ENCODE measurements at regions of chr14 and their contacts with region 1.

Region 1: GRCh38 chr14:78566026-78566858 is 396.1 kb downstream of the NRXN3 start:
- DNase-seq: peak; percentile 39 to 66 (median 46)
- ATAC-seq: peak; percentile 99
- H3K4me3 ChIP-seq: no peak overlapping the region
- H3K27ac ChIP-seq: no peak overlapping the region
- H3K4me1 ChIP-seq: no peaks in the 10 kb centered on the region
- H3K27me3 ChIP-seq: no peaks in the 10 kb centered on the region
- CTCF ChIP-seq: peak; percentile 71 to 75 (median 72)
- EP300 ChIP-seq: no peak
- POLR2A ChIP-seq: no peak
- RAD21 ChIP-seq: peak; percentile 63 to 76

Region 2: DNA sequence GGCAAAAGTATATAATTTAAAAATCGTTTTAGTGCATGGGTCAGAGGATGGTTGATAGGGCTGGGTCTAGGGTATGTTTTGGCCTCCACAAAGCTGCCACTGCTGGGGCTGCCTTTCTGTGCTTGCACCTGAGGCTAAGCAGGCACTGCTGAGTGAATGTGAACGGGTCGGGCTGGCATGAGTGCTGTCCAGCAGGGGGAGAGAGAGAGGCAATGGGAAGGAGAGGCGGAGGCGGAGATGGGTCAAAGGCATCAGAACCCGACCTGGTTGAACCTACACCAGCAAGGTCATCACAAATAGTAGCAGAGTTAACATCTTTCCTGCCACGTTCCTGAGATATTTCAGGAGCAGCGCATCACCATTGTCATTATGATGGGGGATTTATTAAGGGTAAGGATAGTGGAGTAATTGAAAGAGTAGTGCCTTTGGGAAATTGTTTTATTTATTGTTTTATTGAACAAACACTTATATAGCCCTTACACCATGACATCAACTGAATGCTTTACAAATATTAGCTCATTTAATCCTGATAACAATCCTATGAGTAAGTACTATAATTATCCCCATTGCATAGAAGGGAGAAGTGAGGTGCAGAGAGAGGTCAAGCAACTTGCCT is 401.9 kb before region 1 on chr14:
- CTCF ChIA-PET with region 1: no interaction called
- POLR2A ChIA-PET with region 1: no interaction called
- in situ Hi-C with region 1: no loop called
- intact Hi-C with region 1: loop called (anchors 10 kb)
- DNase-seq: peak; percentile 35 to 45 (median 42)
- ATAC-seq: peak; percentile 88
- H3K4me3 ChIP-seq: no peak overlapping the region
- H3K27ac ChIP-seq: no peak overlapping the region
- H3K4me1 ChIP-seq: no peaks in the 10 kb centered on the region; a peak in 1 of 5 replicates
- H3K27me3 ChIP-seq: no peaks in the 10 kb centered on the region; a peak in 1 of 5 replicates
- CTCF ChIP-seq: peak; percentile 56 to 74 (median 67)
- EP300 ChIP-seq: no peak
- POLR2A ChIP-seq: no peak
- RAD21 ChIP-seq: peak in 1 of 2 experiments; percentile 47; a peak in 2 of 4 replicates

Measured in K562 (cell line).